ENCODE measurements at regions of chr12 and their contacts with region 1.

Region 1: DNA sequence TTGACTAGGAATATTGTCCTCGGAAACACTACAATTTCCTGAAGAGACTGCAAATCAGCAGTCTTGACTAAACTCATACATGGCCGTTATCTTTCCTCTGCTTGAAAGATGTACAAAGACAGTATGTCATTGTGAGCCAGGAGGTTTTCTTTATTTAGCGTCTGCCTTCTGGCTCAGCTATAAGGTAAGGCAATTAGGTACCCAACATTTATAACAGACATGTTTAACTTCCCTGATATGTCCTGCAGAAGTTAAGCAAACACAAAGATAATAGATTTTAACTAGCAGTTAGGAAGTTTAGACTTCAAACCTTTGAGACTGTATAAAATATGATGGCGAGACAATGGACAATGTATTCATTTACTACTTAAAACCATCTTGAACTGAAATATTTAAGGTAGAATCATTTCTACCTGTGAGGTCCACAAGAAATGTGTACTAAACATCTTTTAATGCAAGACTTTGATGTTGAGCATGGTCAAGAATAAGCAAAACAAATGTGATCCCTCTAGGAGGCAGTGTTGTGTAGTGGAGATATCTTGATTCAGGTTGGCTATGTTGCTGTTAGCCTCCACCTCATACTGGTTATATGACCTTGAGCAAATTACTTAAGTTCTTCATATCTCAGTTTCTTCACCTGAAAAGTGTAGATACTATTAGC is 96.2 kb upstream of the EEA1 start:
- DNase-seq: no peak
- H3K4me3 ChIP-seq: no peak overlapping the region
- H3K27ac ChIP-seq: no peak overlapping the region
- H3K4me1 ChIP-seq: peaks cover 0 to 4% (median 0%) of the 10 kb centered on the region in 4 donors
- H3K27me3 ChIP-seq: no peaks in the 10 kb centered on the region
- CTCF ChIP-seq: peak; percentile 38 to 59 (median 49)
- EP300 ChIP-seq: no peak
- POLR2A ChIP-seq: no peak

Region 2: GRCh38 chr12:92649511-92650227 is 375.6 kb before region 1 on chr12:
- intact Hi-C with region 1: no loop called
- DNase-seq: no peak
- H3K4me3 ChIP-seq: no peak overlapping the region
- H3K27ac ChIP-seq: no peak overlapping the region
- H3K4me1 ChIP-seq: peaks cover 0 to 3% (median under 1%) of the 10 kb centered on the region in 4 donors
- H3K27me3 ChIP-seq: no peaks in the 10 kb centered on the region
- CTCF ChIP-seq: peak; percentile 41 to 60 (median 52)
- EP300 ChIP-seq: no peak
- POLR2A ChIP-seq: no peak

Region 3: GRCh38 chr12:93397412-93397811 is 372.1 kb after region 1 on chr12:
- intact Hi-C with region 1: loop called (anchors 5 kb)
- DNase-seq: no peak
- H3K4me3 ChIP-seq: no peak overlapping the region
- H3K27ac ChIP-seq: peak overlapping the region in 3 of 4 donors; percentile 33 to 62 (median 35)
- H3K4me1 ChIP-seq: peaks cover 3 to 45% (median 41%) of the 10 kb centered on the region in 4 donors
- H3K27me3 ChIP-seq: no peaks in the 10 kb centered on the region
- CTCF ChIP-seq: no peak
- EP300 ChIP-seq: no peak
- POLR2A ChIP-seq: no peak

Measured in esophagus muscularis mucosa (tissue), 4 donors.